Dorsolateral prefrontal cortex (tissue), 120 donors: ENCODE measurements at regions of chr11 and their contacts with region 1.

Region 1: GRCh38 chr11:34916015-34916842 is at the starts of genes APIP and PDHX:
- DNase-seq: peak; percentile 93 to 99 (median 98)
- H3K4me3 ChIP-seq: peak within 1 kb of the TSS; percentile 44 to 99 (median 92)
- H3K27ac ChIP-seq: peak within 1 kb of the TSS; percentile 21 to 97 (median 92)
- H3K27me3 ChIP-seq: no peaks in the 10 kb centered on the region
- CTCF ChIP-seq: peak in 29 of 56 donors; percentile 6 to 49 (median 27)
- total RNA-seq, gene APIP: 11.1 to 52.7 (median 26.0) TPM
- total RNA-seq, gene PDHX: 36.8 to 111 (median 73.7) TPM

Region 2: DNA sequence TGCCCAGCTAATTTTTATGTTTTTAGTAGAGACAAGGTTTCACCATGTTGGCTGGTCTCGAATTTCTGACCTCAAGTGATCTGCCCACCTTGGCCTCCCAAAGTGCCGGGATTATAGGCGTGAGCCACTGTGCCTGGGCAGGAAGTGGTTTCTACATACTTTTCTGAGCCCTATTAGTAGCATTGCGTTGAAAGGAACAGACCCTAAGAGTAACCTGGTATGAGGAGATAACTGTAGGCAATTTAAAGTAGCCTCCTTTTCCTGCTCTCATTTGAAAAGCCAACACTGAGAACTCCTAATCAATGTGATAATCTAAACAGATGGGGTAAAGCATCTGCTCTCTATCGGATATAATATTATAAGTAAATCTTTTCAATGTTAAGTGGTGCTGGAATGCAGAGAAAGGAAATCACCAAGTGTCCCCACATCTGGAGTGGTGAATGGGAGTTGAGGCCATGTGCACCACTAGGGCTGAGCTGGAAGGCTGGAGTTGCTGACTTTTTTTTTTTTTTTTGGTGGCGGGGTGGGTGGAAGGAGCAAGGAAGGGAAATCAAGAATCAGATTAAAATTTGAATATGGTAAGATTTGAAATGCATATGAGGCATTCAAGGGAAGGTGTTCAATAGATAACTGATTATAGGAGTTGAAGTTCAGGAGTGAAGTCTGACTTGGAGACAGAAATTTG is 20.9 kb after region 1 on chr11:
- intact Hi-C with region 1: loop called in 1 of 2 experiments (anchors 1 kb)
- DNase-seq: no peak
- H3K4me3 ChIP-seq: no peak overlapping the region
- H3K27ac ChIP-seq: no peak overlapping the region
- H3K27me3 ChIP-seq: no peaks in the 10 kb centered on the region
- CTCF ChIP-seq: no peak

Region 3: DNA sequence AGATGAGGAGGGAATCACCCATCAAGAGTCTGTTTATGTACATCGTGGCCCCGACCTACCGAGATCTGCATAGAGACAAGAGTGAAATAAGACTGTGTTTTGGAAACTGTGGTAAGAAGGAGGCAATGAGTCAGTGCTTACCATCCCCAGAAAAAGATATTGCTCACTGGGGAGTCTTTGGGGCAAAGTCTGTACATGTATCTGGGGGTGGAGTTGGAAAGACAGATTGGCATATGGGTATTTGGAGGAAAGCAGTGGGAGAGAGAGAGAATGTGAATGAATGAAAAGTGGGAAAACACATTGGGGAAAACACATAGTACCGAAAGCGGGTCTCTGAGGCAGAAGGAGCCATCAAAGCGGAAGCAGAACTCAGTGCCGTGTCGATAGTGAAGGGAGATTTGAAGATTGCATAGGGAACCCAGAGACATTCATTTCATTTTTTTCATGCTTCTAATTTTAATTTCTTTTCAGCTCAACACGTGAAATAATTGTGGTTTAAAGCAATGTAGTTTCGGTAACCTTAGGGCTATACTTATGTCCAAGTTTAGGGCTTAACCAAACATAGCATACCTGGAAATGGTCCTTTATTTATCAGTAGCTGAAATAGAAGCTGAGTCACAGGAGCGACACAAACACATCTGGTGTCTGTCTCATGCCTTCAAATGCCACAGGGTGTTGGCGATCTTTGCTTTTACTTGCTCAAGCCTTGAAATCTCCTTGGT is 124.2 kb after region 1 on chr11:
- intact Hi-C with region 1: no loop called
- DNase-seq: no peak
- H3K4me3 ChIP-seq: peak overlapping the region in 9 of 59 donors; percentile 7 to 24 (median 18)
- H3K27ac ChIP-seq: no peak overlapping the region
- H3K27me3 ChIP-seq: peaks cover 0 to 3% (median 0%) of the 10 kb centered on the region in 45 donors
- CTCF ChIP-seq: no peak

Region 4: GRCh38 chr11:35100013-35100383 is 183.8 kb after region 1 on chr11:
- intact Hi-C with region 1: no loop called
- DNase-seq: no peak
- H3K4me3 ChIP-seq: no peak overlapping the region
- H3K27ac ChIP-seq: peak overlapping the region in 3 of 59 donors; percentile 16 to 40 (median 35)
- H3K27me3 ChIP-seq: no peaks in the 10 kb centered on the region
- CTCF ChIP-seq: no peak